HepG2 (cell line): ENCODE measurements at regions of chr12 and their contacts with region 1.

Region 1: GRCh38 chr12:71135812-71136176 is 22.0 kb downstream of the TSPAN8 start:
- DNase-seq: no peak
- ATAC-seq: no peak
- H3K4me3 ChIP-seq: no peak overlapping the region
- H3K27ac ChIP-seq: no peak overlapping the region
- H3K4me1 ChIP-seq: peaks cover 53% of the 10 kb centered on the region
- H3K27me3 ChIP-seq: no peaks in the 10 kb centered on the region
- CTCF ChIP-seq: no peak
- EP300 ChIP-seq: no peak
- POLR2A ChIP-seq: no peak
- RAD21 ChIP-seq: no peak

Region 2: DNA sequence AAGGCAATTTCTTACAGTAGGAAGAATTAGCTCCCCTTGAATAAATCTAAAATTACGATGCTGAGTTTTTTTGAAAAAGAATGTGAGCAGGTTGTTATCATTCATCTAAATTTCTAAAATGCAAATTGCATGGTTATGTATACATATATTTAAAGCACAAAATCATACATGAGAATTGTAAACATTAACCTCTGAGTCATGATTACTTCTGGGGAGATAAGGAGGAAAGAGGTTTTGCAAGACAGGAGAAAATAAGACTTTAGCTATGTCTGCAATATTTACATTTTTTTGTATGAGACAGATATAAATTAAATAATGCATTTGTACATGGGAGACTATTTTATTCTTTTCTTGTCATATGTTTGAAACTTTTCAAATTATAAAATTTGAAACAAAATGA is 50.2 kb before region 1 on chr12:
- CTCF ChIA-PET with region 1: no interaction called
- POLR2A ChIA-PET with region 1: no interaction called
- in situ Hi-C with region 1: no loop called
- intact Hi-C with region 1: no loop called
- DNase-seq: no peak
- ATAC-seq: no peak
- H3K4me3 ChIP-seq: no peak overlapping the region
- H3K27ac ChIP-seq: no peak overlapping the region
- H3K4me1 ChIP-seq: no peaks in the 10 kb centered on the region
- H3K27me3 ChIP-seq: no peaks in the 10 kb centered on the region
- CTCF ChIP-seq: no peak
- EP300 ChIP-seq: no peak
- POLR2A ChIP-seq: no peak
- RAD21 ChIP-seq: no peak

Region 3: DNA sequence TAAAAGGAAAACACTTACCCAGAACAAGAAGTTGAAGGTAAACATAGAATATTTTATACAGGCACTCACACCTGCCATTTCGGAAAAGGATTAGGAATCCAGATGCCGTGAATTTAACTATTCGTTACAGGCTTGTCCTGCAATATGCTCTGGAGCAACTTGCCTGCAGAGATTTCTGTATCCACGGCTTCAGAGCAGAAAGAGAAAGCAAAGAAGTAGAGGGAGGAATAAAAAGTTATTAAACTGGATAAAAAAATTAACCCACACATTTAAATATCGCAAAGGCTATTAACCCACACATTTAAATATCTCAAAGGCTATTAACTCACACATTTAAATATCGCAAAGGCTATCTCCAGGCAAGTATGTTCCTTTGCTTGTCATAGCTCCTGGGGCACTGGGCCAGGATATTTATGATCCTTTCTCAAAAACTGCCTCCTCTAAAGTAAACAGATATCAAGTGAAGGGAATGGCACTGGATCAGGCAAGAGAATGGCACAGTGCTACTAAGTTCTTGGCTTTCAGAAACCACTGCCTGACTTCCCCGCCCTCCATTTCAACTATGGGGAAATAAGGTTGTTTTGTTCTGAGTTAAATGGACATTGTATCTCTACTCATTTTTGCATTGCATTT is 21.9 kb after region 1 on chr12 and contains the start of gene TSPAN8:
- CTCF ChIA-PET with region 1: no interaction called
- POLR2A ChIA-PET with region 1: no interaction called
- in situ Hi-C with region 1: no loop called
- intact Hi-C with region 1: loop called (anchors 2 kb)
- DNase-seq: peak; percentile 64
- ATAC-seq: peak; percentile 28; the same call in 2 of the 3 replicates
- H3K4me3 ChIP-seq: no peak within 1 kb of the TSS; a peak in 1 of 6 replicates
- H3K27ac ChIP-seq: peak within 1 kb of the TSS; percentile 54
- H3K4me1 ChIP-seq: peaks cover 83% of the 10 kb centered on the region
- H3K27me3 ChIP-seq: no peaks in the 10 kb centered on the region
- CTCF ChIP-seq: no peak
- EP300 ChIP-seq: no peak
- POLR2A ChIP-seq: no peak
- RAD21 ChIP-seq: no peak
- total RNA-seq, gene TSPAN8: 3.2 and 3.9 TPM in 2 replicates

Region 4: GRCh38 chr12:71385155-71385554 is 249.4 kb after region 1 on chr12:
- CTCF ChIA-PET with region 1: no interaction called
- POLR2A ChIA-PET with region 1: no interaction called
- in situ Hi-C with region 1: loop called (anchors 10 kb)
- intact Hi-C with region 1: no loop called
- DNase-seq: no peak
- ATAC-seq: no peak
- H3K4me3 ChIP-seq: no peak overlapping the region
- H3K27ac ChIP-seq: no peak overlapping the region
- H3K4me1 ChIP-seq: no peaks in the 10 kb centered on the region
- H3K27me3 ChIP-seq: no peaks in the 10 kb centered on the region; a peak in 1 of 5 replicates
- CTCF ChIP-seq: no peak
- EP300 ChIP-seq: no peak
- POLR2A ChIP-seq: no peak
- RAD21 ChIP-seq: no peak